Activated T-helper 1 cell treated with anti-CD3 and anti-CD28 coated beads, Interleukin-12 subunit alpha, Interleukin-12 subunit beta, Interleukin-2, Interleukin-4 antibody, amounts not matched to agents 30 ng/mL and 10 ng/mL and 1 ng/mL, durations not matched to agents 14 hours and 24 hours and 36 hours (primary cell): ENCODE measurements at regions of chr16 and their contacts with region 1.

Region 1: DNA sequence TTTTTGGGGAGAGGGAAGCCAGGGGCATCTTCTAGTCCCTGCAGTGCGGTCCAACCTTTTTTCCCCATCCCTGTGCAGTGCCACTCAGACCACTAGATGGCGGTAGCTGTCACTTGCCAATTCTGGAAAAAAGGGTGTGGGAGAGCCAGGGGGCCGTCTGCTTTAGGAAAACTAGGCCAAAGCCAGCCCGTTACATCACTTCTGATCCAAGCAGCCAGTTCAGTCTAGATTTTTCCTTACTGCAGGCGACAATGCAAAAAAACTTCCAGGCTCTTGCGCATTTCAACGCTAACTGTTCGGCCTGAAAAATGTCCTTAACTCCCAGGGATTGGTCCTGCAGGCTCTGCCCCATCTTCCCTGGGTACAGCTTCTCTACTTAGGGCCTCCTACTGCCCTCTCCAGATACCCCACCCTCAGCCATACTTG is 69.2 kb upstream of the CES5A start:
- DNase-seq: peak; percentile 2
- H3K4me3 Mint-ChIP-seq: no peak overlapping the region
- H3K27ac Mint-ChIP-seq: no peak overlapping the region
- H3K4me1 Mint-ChIP-seq: no peaks in the 10 kb centered on the region
- H3K27me3 Mint-ChIP-seq: peaks cover 21% of the 10 kb centered on the region

Region 2: GRCh38 chr16:56277040-56277439 is 332.6 kb after region 1 on chr16:
- intact Hi-C with region 1: loop called (anchors 1 kb)
- DNase-seq: no peak
- H3K4me3 Mint-ChIP-seq: no peak overlapping the region
- H3K27ac Mint-ChIP-seq: no peak overlapping the region
- H3K4me1 Mint-ChIP-seq: peaks cover 22% of the 10 kb centered on the region
- H3K27me3 Mint-ChIP-seq: peaks cover 26% of the 10 kb centered on the region

Region 3: DNA sequence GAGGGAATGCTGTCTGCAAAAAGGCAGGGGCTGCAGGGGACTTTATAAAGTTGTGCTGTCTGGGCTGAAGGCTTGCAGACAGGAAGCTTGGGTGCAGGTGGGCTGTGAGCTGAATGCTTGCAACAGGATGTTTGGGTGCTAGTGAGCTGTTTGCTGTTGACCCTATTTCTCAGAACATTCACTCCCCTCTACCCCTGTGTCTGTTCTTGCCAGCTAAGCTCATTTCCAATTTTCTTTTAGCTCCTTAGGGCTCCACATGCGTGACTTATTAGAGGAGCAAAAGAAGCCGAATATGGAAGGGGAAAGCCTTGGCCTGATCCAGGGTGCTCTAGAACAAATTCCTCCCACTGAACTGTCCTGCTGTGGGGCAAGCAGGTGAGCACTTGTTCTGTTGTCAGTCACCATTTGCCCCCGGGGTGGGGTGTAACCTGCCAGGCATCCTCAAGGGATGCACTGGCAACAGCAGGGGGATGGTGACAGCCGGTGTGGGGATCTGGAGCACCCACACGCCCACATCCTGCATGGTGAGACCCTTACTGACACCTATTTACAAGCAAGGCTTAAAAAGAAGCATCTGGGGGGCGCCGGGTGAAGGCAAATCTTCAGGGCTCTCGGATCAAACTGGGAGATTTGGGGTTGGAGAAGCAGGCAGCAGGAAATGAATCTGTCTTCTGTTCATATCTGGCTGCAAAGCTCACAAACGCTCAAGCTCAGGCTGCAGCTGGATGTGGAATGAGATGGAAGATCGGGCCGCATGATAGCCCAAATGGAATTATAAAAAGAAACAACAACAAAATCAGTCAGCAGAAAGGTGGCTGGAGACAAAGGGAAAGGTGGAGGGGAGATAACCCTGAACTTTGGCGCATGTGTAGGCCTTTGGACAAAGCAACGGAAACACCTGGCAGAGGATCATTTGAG is 764.4 kb after region 1 on chr16:
- intact Hi-C with region 1: loop called (anchors 10 kb)
- DNase-seq: no peak
- H3K4me3 Mint-ChIP-seq: peak overlapping the region; percentile 71
- H3K27ac Mint-ChIP-seq: peak overlapping the region; percentile 6
- H3K4me1 Mint-ChIP-seq: peaks cover 26% of the 10 kb centered on the region
- H3K27me3 Mint-ChIP-seq: no peaks in the 10 kb centered on the region